AG04450 (cell line): ENCODE measurements at regions of chr1 and their contacts with region 1.

Region 1: GRCh38 chr1:43073490-43074230 is 98.4 kb downstream of the EBNA1BP2 start:
- DNase-seq: peak; percentile 47
- H3K4me3 ChIP-seq: no peak overlapping the region
- H3K27ac ChIP-seq: no peak overlapping the region
- H3K27me3 ChIP-seq: no peaks in the 10 kb centered on the region
- CTCF ChIP-seq: peak; percentile 84

Region 2: GRCh38 chr1:42777852-42778251 is 295.8 kb before region 1 on chr1:
- CTCF ChIA-PET with region 1: interaction called, 108 read pairs
- POLR2A ChIA-PET with region 1: interaction called, 3 read pairs
- DNase-seq: no peak
- H3K4me3 ChIP-seq: no peak overlapping the region
- H3K27ac ChIP-seq: no peak overlapping the region
- H3K27me3 ChIP-seq: no peaks in the 10 kb centered on the region
- CTCF ChIP-seq: peak; percentile 69

Region 3: DNA sequence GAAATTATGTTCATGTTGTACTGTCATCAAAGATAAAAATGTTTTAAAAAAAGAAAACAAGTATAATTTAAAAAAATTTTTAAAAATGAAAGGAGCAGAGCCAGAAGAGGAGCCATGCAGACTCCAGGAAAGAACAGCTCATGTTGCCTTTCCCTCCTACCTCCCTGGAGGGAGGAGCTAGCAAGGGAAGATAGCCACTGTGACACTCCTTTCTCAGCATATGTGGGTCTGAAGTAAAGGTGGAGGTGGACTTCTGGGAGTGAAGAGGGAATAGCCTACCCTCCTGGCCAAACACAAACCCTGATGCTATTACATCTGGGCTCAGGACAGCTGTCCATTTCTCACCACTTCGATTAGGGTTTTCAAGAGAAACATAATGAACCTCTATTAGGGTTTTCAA is 169.2 kb before region 1 on chr1:
- CTCF ChIA-PET with region 1: interaction called, 15 read pairs
- POLR2A ChIA-PET with region 1: no interaction called
- DNase-seq: no peak
- H3K4me3 ChIP-seq: no peak overlapping the region
- H3K27ac ChIP-seq: no peak overlapping the region
- H3K27me3 ChIP-seq: peaks cover 22% of the 10 kb centered on the region
- CTCF ChIP-seq: no peak

Region 4: GRCh38 chr1:42931108-42931539 is 142.5 kb before region 1 on chr1:
- CTCF ChIA-PET with region 1: interaction called, 18 read pairs
- POLR2A ChIA-PET with region 1: interaction called, 3 read pairs
- DNase-seq: no peak
- H3K4me3 ChIP-seq: no peak overlapping the region
- H3K27ac ChIP-seq: no peak overlapping the region
- H3K27me3 ChIP-seq: no peaks in the 10 kb centered on the region
- CTCF ChIP-seq: peak; percentile 61

Region 5: GRCh38 chr1:42952303-42953001 is 121.2 kb before region 1 on chr1:
- CTCF ChIA-PET with region 1: interaction called, 20 read pairs
- POLR2A ChIA-PET with region 1: interaction called, 3 read pairs
- DNase-seq: no peak
- H3K4me3 ChIP-seq: no peak overlapping the region
- H3K27ac ChIP-seq: peak overlapping the region; percentile 52
- H3K27me3 ChIP-seq: no peaks in the 10 kb centered on the region
- CTCF ChIP-seq: no peak

Region 6: DNA sequence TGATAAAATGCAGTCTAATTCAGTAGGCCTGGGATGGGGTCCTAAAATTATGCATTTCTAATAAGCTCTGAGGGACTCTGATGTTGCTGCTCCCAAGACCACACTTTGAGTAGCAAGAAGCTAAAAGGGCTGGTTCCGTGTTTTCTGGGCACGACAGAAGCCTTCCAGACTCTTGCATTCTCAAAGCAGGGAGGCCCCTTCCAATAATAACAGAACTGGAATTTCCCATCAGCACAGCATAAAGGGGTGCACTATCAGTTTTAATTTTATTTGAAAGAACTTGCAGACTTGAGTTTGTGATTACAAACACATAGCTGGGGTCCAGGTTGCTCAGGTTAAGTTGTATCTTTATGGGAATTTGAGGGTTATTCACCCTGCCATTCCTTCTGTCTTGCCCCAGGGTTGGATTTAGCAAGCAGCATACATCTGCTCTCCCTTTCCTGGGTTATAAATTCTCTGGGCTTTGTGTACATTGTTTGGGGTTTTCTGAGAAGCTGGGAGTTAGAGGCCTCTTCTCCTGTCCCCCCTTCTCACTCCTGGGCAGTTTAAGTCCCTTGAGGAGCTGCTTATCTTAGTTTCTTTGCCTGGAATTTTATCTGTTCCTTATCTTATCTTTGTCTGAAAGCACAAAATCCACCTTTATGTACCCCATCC is 20.7 kb before region 1 on chr1:
- CTCF ChIA-PET with region 1: interaction called, 13 read pairs
- POLR2A ChIA-PET with region 1: no interaction called
- DNase-seq: no peak
- H3K4me3 ChIP-seq: no peak overlapping the region
- H3K27ac ChIP-seq: peak overlapping the region; percentile 21
- H3K27me3 ChIP-seq: peaks cover 5% of the 10 kb centered on the region
- CTCF ChIP-seq: no peak

Region 7: GRCh38 chr1:43101061-43101460 is 27.4 kb after region 1 on chr1:
- CTCF ChIA-PET with region 1: no interaction called
- POLR2A ChIA-PET with region 1: no interaction called
- DNase-seq: no peak
- H3K4me3 ChIP-seq: no peak overlapping the region
- H3K27ac ChIP-seq: no peak overlapping the region
- H3K27me3 ChIP-seq: no peaks in the 10 kb centered on the region
- CTCF ChIP-seq: no peak

Region 8: GRCh38 chr1:43147553-43148319 is 74.1 kb after region 1 on chr1:
- CTCF ChIA-PET with region 1: no interaction called
- POLR2A ChIA-PET with region 1: no interaction called
- DNase-seq: no peak
- H3K4me3 ChIP-seq: peak overlapping the region; percentile 64
- H3K27ac ChIP-seq: no peak overlapping the region
- H3K27me3 ChIP-seq: peaks cover 39% of the 10 kb centered on the region
- CTCF ChIP-seq: no peak

Region 9: GRCh38 chr1:43214501-43215444 is 141.1 kb after region 1 on chr1:
- CTCF ChIA-PET with region 1: no interaction called
- POLR2A ChIA-PET with region 1: no interaction called
- DNase-seq: peak; percentile 8
- H3K4me3 ChIP-seq: no peak overlapping the region
- H3K27ac ChIP-seq: no peak overlapping the region
- H3K27me3 ChIP-seq: no peaks in the 10 kb centered on the region
- CTCF ChIP-seq: no peak